ENCODE measurements at regions of chr2 and their contacts with region 1.

Region 1: GRCh38 chr2:223727562-223727961 is 109.8 kb downstream of the AP1S3 start:
- DNase-seq: no peak
- H3K4me3 ChIP-seq: no peak overlapping the region
- H3K27ac ChIP-seq: peak overlapping the region in 1 of 2 donors; percentile 39
- H3K4me1 ChIP-seq: peaks cover 4 to 9% of the 10 kb centered on the region in 2 donors
- H3K27me3 ChIP-seq: no peaks in the 10 kb centered on the region
- CTCF ChIP-seq: peak in 2 of 3 experiments; percentile 30 to 53

Region 2: GRCh38 chr2:222993920-222994650 is 733.5 kb before region 1 on chr2:
- intact Hi-C with region 1: loop called (anchors 10 kb)
- DNase-seq: peak; percentile 69 to 94
- H3K4me3 ChIP-seq: peak overlapping the region; percentile 19 to 40
- H3K27ac ChIP-seq: peak overlapping the region; percentile 77 to 96
- H3K4me1 ChIP-seq: peaks cover 9 to 16% of the 10 kb centered on the region in 2 donors
- H3K27me3 ChIP-seq: no peaks in the 10 kb centered on the region
- CTCF ChIP-seq: no peak

Region 3: GRCh38 chr2:223613017-223613950 is 114.3 kb before region 1 on chr2:
- intact Hi-C with region 1: loop called (anchors 5 kb)
- DNase-seq: peak; percentile 59 to 94
- H3K4me3 ChIP-seq: peak overlapping the region; percentile 37 to 43
- H3K27ac ChIP-seq: peak overlapping the region; percentile 71 to 77
- H3K4me1 ChIP-seq: peaks cover 0 to 9% of the 10 kb centered on the region in 2 donors
- H3K27me3 ChIP-seq: no peaks in the 10 kb centered on the region
- CTCF ChIP-seq: peak in 2 of 3 experiments; percentile 7 to 15

Region 4: GRCh38 chr2:223779877-223780276 is 52.3 kb after region 1 on chr2:
- intact Hi-C with region 1: no loop called
- DNase-seq: no peak
- H3K4me3 ChIP-seq: no peak overlapping the region
- H3K27ac ChIP-seq: no peak overlapping the region
- H3K4me1 ChIP-seq: no peaks in the 10 kb centered on the region
- H3K27me3 ChIP-seq: no peaks in the 10 kb centered on the region
- CTCF ChIP-seq: no peak

Region 5: GRCh38 chr2:223797811-223798721 is 70.5 kb after region 1 on chr2:
- intact Hi-C with region 1: no loop called
- DNase-seq: no peak
- H3K4me3 ChIP-seq: no peak overlapping the region
- H3K27ac ChIP-seq: no peak overlapping the region
- H3K4me1 ChIP-seq: no peaks in the 10 kb centered on the region
- H3K27me3 ChIP-seq: no peaks in the 10 kb centered on the region
- CTCF ChIP-seq: peak; percentile 61 to 75 (median 68)

Measured in ascending aorta (tissue), 2 donors.